IMR-90 (cell line): ENCODE measurements at regions of chr6 and their contacts with region 1.

Region 1: GRCh38 chr6:11496152-11497060 is 41.1 kb upstream of the TMEM170B start:
- DNase-seq: peak; percentile 84
- ATAC-seq: peak; percentile 95
- H3K4me3 ChIP-seq: no peak overlapping the region
- H3K27ac ChIP-seq: no peak overlapping the region
- H3K4me1 ChIP-seq: peaks cover 8% of the 10 kb centered on the region
- H3K27me3 ChIP-seq: no peaks in the 10 kb centered on the region
- CTCF ChIP-seq: peak; percentile 99
- POLR2A ChIP-seq: 0 out of 2 replicates have a peak, but pooled peaks have one; percentile 53
- RAD21 ChIP-seq: peak; percentile 98

Region 2: DNA sequence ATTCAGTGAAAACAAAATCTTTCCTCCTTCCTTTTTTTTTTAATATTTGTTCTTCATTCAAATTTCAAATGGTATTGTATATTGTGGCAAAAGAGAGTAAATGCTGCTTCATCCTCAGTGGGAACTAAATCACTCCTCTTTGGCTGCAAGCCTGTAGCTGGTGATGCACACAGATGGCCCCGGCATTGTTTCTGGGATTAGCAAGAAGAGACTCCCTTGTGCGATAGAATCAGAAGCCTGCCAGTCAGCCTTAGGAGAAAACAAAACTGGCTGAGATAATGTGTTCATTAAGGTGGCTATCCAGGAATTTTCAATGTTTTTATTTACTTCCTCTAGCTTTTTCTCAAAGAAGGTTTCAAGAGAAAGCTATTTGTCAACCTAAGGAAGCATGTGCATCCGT is 431.6 kb before region 1 on chr6:
- CTCF ChIA-PET with region 1: no interaction called
- POLR2A ChIA-PET with region 1: no interaction called
- dilution Hi-C with region 1: no loop called
- in situ Hi-C with region 1: loop called (anchors 5 kb)
- intact Hi-C with region 1: loop called (anchors 1 kb)
- DNase-seq: no peak
- ATAC-seq: no peak
- H3K4me3 ChIP-seq: no peak overlapping the region
- H3K27ac ChIP-seq: no peak overlapping the region
- H3K4me1 ChIP-seq: no peaks in the 10 kb centered on the region
- H3K27me3 ChIP-seq: peaks cover 9% of the 10 kb centered on the region
- CTCF ChIP-seq: no peak
- POLR2A ChIP-seq: no peak
- RAD21 ChIP-seq: no peak

Region 3: GRCh38 chr6:11144393-11144851 is 352.0 kb before region 1 on chr6:
- CTCF ChIA-PET with region 1: interaction called, 15 read pairs
- POLR2A ChIA-PET with region 1: no interaction called
- dilution Hi-C with region 1: no loop called
- in situ Hi-C with region 1: loop called (anchors 5 kb)
- intact Hi-C with region 1: loop called (anchors 1 kb)
- DNase-seq: peak; percentile 72
- ATAC-seq: peak; percentile 76
- H3K4me3 ChIP-seq: no peak overlapping the region
- H3K27ac ChIP-seq: no peak overlapping the region
- H3K4me1 ChIP-seq: peaks cover 4% of the 10 kb centered on the region; the same call in 1 of the 2 replicates
- H3K27me3 ChIP-seq: no peaks in the 10 kb centered on the region
- CTCF ChIP-seq: peak; percentile 88
- POLR2A ChIP-seq: 0 out of 2 replicates have a peak, but pooled peaks have one; percentile 49
- RAD21 ChIP-seq: peak; percentile 96

Region 4: GRCh38 chr6:11232193-11232769 is 264.1 kb before region 1 on chr6 and contains the start of gene NEDD9:
- CTCF ChIA-PET with region 1: interaction called, 6 read pairs
- POLR2A ChIA-PET with region 1: no interaction called
- dilution Hi-C with region 1: no loop called
- in situ Hi-C with region 1: loop called (anchors 10 kb)
- intact Hi-C with region 1: loop called (anchors 1 kb)
- DNase-seq: peak; percentile 97
- ATAC-seq: peak; percentile 98
- H3K4me3 ChIP-seq: peak within 1 kb of the TSS; percentile 71
- H3K27ac ChIP-seq: peak within 1 kb of the TSS; percentile 53
- H3K4me1 ChIP-seq: peaks cover 12% of the 10 kb centered on the region
- H3K27me3 ChIP-seq: no peaks in the 10 kb centered on the region
- CTCF ChIP-seq: no peak
- POLR2A ChIP-seq: peak; percentile 98
- RAD21 ChIP-seq: no peak; the same call in 1 of the 2 replicates
- total RNA-seq, gene NEDD9: 16.5 and 16.7 TPM in 2 replicates

Region 5: GRCh38 chr6:11324453-11325015 is 171.9 kb before region 1 on chr6:
- CTCF ChIA-PET with region 1: interaction called, 4 read pairs
- POLR2A ChIA-PET with region 1: no interaction called
- dilution Hi-C with region 1: no loop called
- in situ Hi-C with region 1: no loop called
- intact Hi-C with region 1: loop called (anchors 5 kb)
- DNase-seq: peak; percentile 19
- ATAC-seq: no peak
- H3K4me3 ChIP-seq: no peak overlapping the region
- H3K27ac ChIP-seq: no peak overlapping the region
- H3K4me1 ChIP-seq: peaks cover 14% of the 10 kb centered on the region
- H3K27me3 ChIP-seq: no peaks in the 10 kb centered on the region
- CTCF ChIP-seq: no peak
- POLR2A ChIP-seq: no peak
- RAD21 ChIP-seq: no peak

Region 6: GRCh38 chr6:11632795-11633511 is 136.5 kb after region 1 on chr6:
- CTCF ChIA-PET with region 1: no interaction called
- POLR2A ChIA-PET with region 1: no interaction called
- dilution Hi-C with region 1: no loop called
- in situ Hi-C with region 1: no loop called
- intact Hi-C with region 1: no loop called
- DNase-seq: peak; percentile 90
- ATAC-seq: peak; percentile 93
- H3K4me3 ChIP-seq: no peak overlapping the region
- H3K27ac ChIP-seq: peak overlapping the region; percentile 60
- H3K4me1 ChIP-seq: peaks cover 12% of the 10 kb centered on the region
- H3K27me3 ChIP-seq: no peaks in the 10 kb centered on the region
- CTCF ChIP-seq: no peak
- POLR2A ChIP-seq: no peak
- RAD21 ChIP-seq: no peak